ENCODE measurements at regions of chr7 and their contacts with region 1.

Region 1: DNA sequence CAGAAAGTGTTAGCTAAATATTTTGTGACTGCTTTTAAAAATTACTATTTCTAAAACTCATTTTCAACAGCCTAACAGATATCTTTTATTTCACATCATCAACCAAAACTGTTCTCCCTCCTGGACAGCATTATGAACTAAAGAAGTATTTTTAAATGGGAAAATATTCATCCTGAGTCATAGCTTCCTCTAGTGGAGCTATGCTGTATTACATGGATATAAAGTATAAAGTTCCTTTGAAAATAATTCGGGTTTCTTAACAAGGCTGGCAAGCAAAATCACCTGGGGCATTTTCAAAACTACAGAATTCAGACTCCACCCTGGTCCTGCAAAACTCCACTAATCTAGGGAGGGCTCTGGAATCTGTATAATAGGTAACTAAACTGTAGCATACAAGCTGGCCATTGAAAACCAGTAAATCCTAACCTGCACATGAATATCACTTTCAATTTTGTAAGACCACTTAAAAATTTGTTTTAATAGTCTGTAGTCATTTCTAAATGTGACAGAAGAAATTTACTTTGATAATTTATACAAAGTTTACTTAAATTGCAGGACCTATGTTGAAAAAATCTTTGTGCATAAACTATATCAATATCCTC is 53.5 kb downstream of the SCIN start:
- DNase-seq: peak; percentile 10
- CTCF ChIP-seq: peak; percentile 56

Region 2: DNA sequence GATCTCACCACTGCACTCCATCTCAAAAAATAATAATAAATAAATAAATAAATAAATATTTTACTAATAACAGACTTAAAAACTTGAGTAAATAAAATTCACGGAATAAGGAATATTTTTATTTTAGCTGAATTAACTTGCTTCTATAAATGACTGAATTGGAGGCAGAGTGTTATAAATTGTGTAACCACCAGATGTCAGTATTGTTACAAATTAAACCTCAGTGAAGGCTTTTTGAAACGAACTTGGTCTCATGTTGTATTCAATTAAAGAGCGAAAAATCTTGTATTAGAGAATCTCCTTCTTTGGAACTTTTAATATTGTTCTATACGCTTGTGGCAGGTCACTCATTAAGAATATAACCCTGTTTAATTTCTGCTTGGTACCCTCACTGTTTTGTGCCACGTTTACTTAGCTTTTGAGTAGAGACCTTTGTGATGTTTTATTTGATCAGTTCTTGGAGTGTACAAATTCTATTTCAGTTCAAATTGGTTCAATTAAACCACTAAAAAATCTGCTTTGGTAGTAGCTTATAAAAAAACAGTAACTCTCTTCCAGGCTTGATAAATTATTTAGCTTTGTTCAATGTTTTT is 99.1 kb before region 1 on chr7:
- CTCF ChIA-PET with region 1: interaction called, 57 read pairs
- POLR2A ChIA-PET with region 1: no interaction called
- DNase-seq: peak; percentile 17
- CTCF ChIP-seq: peak; percentile 54

Region 3: GRCh38 chr7:12607134-12607533 is 16.9 kb before region 1 on chr7:
- CTCF ChIA-PET with region 1: interaction called, 26 read pairs
- POLR2A ChIA-PET with region 1: no interaction called
- DNase-seq: no peak
- CTCF ChIP-seq: no peak

Region 4: DNA sequence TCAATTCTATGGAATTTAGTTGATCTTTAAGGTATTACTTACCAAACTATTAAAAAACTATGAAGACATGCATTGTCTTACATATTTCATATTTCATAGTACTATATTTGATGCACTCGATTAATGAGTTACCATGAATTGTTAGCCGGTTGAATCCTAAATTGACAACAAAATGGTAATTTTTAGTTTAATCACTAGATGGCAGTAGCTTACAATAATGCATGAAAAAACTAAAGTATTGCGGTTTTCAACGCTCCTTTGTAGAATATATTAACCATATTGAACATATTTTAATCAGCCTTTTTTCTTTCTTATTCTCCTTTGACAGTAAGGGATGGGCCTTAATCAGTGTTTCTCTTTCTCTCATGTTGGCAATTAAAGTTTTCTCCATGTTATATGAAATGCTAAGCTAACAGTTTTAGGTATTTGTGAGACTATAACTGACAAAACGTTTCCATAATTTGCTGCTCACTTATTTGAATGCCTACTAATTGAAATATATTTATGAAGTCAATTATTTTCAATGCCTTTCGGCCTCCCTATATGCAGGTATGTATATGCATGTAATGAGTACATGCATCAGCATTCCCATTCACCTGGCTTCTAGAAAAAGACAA is 15.0 kb after region 1 on chr7:
- CTCF ChIA-PET with region 1: interaction called, 13 read pairs
- POLR2A ChIA-PET with region 1: no interaction called
- DNase-seq: peak; percentile 17
- CTCF ChIP-seq: peak; percentile 45

Measured in GM10248 (cell line).